CD8-positive, alpha-beta T cell (primary cell): ENCODE measurements at regions of chr21 and their contacts with region 1.

Region 1: DNA sequence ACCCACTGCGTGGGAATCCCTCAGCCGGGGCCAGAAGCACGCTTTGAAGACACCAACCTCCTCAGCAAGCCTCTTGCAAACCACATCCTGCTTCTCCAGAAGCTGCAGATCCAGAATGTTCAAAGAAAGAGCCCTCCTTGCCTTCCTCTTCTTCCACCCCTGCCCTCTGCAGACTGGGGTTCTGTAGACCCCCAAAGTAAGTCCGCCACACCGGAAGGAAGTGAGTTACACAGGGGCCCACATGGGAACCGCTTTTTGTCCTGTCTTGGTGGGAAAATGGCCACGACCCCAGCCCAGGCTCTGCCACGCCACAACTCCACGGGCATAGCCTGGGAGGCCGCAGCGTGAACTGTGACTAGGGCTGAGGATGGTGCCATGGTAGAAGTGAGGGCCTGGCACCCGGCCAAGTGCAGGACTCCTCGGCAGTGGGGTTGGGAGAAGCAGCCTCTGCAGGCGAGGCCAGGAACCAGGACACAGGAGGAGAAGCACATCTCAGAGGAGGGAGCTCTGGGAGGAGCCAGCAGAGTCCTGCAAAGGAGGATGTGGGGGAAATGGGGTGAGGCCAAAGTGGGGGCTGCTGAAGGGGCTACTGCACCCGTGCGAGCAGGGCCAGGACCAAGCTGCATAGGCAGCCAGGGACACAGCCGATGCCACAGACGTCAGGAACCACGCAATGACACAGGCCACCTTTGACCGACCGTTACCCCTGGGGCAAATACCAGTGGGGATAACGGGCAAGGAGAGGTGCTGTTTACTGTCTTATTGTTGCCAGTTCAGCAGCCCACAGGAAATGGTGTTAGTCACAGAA is 30.9 kb downstream of the PDE9A start:
- DNase-seq: peak in 8 of 9 experiments; percentile 20 to 77 (median 58)
- ATAC-seq: peak; percentile 67
- H3K4me3 ChIP-seq: peak overlapping the region in 1 of 2 experiments; percentile 22
- H3K4me3 Mint-ChIP-seq: peak overlapping the region; percentile 74
- H3K27ac ChIP-seq: peak overlapping the region in 1 of 2 experiments; percentile 12
- H3K27ac Mint-ChIP-seq: peak overlapping the region; percentile 87
- H3K4me1 ChIP-seq: peaks cover 45% of the 10 kb centered on the region
- H3K4me1 Mint-ChIP-seq: peaks cover 49% of the 10 kb centered on the region
- H3K27me3 ChIP-seq: no peaks in the 10 kb centered on the region
- H3K27me3 Mint-ChIP-seq: no peaks in the 10 kb centered on the region
- CTCF ChIP-seq: no peak

Region 2: GRCh38 chr21:42614811-42615659 is 69.3 kb before region 1 on chr21:
- CTCF ChIA-PET with region 1: no interaction called
- POLR2A ChIA-PET with region 1: no interaction called
- intact Hi-C with region 1: loop called in 1 of 2 experiments (anchors 10 kb)
- DNase-seq: peak; percentile 14 to 80 (median 43)
- ATAC-seq: peak; percentile 69
- H3K4me3 ChIP-seq: peak overlapping the region; percentile 16 to 22
- H3K4me3 Mint-ChIP-seq: no peak overlapping the region
- H3K27ac ChIP-seq: peak overlapping the region in 1 of 2 experiments; percentile 7
- H3K27ac Mint-ChIP-seq: no peak overlapping the region
- H3K4me1 ChIP-seq: peaks cover 37% of the 10 kb centered on the region
- H3K4me1 Mint-ChIP-seq: peaks cover 10% of the 10 kb centered on the region
- H3K27me3 ChIP-seq: peaks cover 0 to 3% of the 10 kb centered on the region in 2 experiments
- H3K27me3 Mint-ChIP-seq: peaks cover 3% of the 10 kb centered on the region
- CTCF ChIP-seq: no peak

Region 3: DNA sequence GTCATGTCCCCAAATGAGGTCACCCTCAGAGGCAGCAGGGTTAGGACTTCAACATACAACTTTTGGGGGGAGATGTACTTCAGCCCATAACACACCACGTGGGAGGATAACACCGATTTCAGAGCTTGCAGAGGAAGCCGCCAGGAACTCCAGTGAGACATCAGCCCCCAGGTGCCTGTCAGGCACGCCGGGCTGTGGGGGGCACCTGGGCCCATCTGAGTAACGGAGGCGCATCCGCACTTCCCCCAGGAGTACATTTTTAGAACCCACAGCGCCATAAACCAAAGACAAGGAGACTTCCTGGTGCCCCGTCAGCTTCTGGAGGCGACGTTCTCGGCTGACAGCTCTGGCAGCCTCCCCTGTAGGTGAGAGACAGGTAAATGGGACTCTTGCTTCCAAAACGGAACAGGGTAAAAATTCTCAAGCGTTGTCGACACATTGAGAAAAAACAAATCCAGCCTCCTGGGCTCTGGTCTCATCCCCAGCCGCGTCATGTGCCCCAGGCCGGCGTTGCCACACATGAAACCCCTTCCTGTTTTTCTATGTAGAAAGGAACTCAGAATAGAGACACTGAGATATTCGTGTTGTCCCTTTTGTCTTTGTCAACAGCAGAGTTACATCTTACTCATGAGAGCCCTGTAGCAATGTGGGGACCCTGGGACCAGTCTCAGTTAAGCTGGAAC is 62.4 kb after region 1 on chr21:
- CTCF ChIA-PET with region 1: no interaction called
- POLR2A ChIA-PET with region 1: interaction called, 15 read pairs
- intact Hi-C with region 1: loop called (anchors 2 to 5 kb)
- DNase-seq: peak; percentile 22 to 82 (median 64)
- ATAC-seq: peak; percentile 79
- H3K4me3 ChIP-seq: peak overlapping the region; percentile 12 to 27
- H3K4me3 Mint-ChIP-seq: peak overlapping the region; percentile 75
- H3K27ac ChIP-seq: peak overlapping the region; percentile 63 to 76
- H3K27ac Mint-ChIP-seq: peak overlapping the region; percentile 97
- H3K4me1 ChIP-seq: peaks cover 29% of the 10 kb centered on the region
- H3K4me1 Mint-ChIP-seq: peaks cover 33% of the 10 kb centered on the region
- H3K27me3 ChIP-seq: no peaks in the 10 kb centered on the region
- H3K27me3 Mint-ChIP-seq: no peaks in the 10 kb centered on the region
- CTCF ChIP-seq: no peak